ENCODE measurements at regions of chr17 and their contacts with region 1.

Region 1: DNA sequence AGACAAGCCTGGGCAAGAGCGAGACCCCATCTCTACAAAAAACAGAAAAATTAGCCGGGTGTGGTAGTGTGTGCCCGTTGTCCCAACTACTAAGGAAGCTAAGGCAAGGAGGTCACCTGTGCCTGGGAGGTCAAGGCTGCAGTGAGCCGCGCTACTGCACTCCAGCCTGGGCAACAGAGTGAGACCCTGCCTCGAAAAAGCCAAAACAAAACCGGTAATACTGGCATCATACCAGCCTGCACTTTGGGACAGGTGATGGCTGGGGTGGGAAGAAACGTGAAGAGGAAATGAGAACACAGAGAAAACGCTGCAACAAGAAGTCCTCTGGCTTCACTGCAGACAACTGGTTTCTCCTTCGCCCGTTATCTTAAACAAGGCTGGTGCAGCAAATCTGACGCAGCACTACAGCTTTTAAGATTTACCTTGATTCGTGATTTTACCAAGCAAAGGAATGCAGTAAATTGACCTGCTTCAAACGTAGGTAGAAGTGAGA is 725 bp upstream of the CASC3 start:
- DNase-seq: no peak
- ATAC-seq: peak in 3 of 4 donors; percentile 6 to 7 (median 7)
- H3K4me3 ChIP-seq: peak overlapping the region; percentile 85
- H3K27ac ChIP-seq: peak overlapping the region; percentile 98
- H3K4me1 ChIP-seq: peaks cover 29% of the 10 kb centered on the region
- H3K27me3 ChIP-seq: no peaks in the 10 kb centered on the region
- CTCF ChIP-seq: no peak

Region 2: GRCh38 chr17:40018211-40019121 is 121.1 kb before region 1 on chr17:
- intact Hi-C with region 1: no loop called
- DNase-seq: peak; percentile 85 to 95
- ATAC-seq: peak; percentile 43 to 49 (median 47)
- H3K4me3 ChIP-seq: no peak overlapping the region
- H3K27ac ChIP-seq: peak overlapping the region; percentile 87
- H3K4me1 ChIP-seq: peaks cover 85% of the 10 kb centered on the region
- H3K27me3 ChIP-seq: no peaks in the 10 kb centered on the region
- CTCF ChIP-seq: no peak

Region 3: GRCh38 chr17:40121181-40122135 is 18.2 kb before region 1 on chr17 and contains the start of gene MSL1:
- intact Hi-C with region 1: loop called in 1 of 2 experiments (anchors 2 kb)
- DNase-seq: peak; percentile 93 to 95
- ATAC-seq: peak; percentile 88 to 90 (median 89)
- H3K4me3 ChIP-seq: peak within 1 kb of the TSS; percentile 100
- H3K27ac ChIP-seq: peak within 1 kb of the TSS; percentile 98
- H3K4me1 ChIP-seq: peaks cover 20% of the 10 kb centered on the region
- H3K27me3 ChIP-seq: no peaks in the 10 kb centered on the region
- CTCF ChIP-seq: no peak
- total RNA-seq, gene MSL1: 63.3 to 75.6 (median 69.0) TPM

Region 4: DNA sequence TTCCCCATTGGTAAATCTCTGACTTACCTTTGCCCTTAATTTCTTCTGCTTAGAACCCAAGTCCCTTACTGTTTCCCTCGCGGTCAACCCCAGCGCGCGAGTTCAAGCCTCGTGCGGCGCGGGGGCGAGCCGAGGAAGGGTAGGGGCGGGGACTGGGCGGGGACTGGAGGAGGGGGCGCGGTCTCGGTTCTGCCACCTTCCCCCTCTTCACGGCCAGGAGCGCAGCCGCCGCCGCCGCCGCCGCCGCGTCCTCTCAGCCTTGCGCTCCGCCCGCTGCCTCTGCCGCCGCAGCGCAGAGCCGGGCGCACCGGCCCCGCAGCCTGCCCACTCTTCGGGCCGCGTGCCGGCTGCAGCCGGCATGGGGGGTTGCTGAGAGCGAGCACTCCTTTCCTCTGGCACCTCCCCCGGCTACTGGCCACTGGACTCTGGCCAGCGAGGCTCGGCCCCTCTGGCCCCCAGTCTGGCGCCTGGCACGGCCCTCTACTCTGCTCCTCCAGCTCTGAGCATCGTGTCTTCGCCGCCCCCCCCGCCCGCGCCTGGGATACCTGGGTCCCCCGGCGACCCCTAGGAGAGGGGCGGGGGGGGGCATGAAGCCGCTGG is 37.8 kb after region 1 on chr17 and contains the start of gene RAPGEFL1:
- intact Hi-C with region 1: no loop called
- DNase-seq: peak; percentile 80 to 82
- ATAC-seq: peak; percentile 58 to 76 (median 68)
- H3K4me3 ChIP-seq: peak within 1 kb of the TSS; percentile 59
- H3K27ac ChIP-seq: no peak within 1 kb of the TSS
- H3K4me1 ChIP-seq: peaks cover 7% of the 10 kb centered on the region
- H3K27me3 ChIP-seq: no peaks in the 10 kb centered on the region
- CTCF ChIP-seq: no peak
- total RNA-seq, gene RAPGEFL1: 2.8 to 5.7 (median 3.9) TPM